ENCODE measurements at regions of chr2 and their contacts with region 1.

Region 1: GRCh38 chr2:38619458-38620164 is 16.9 kb upstream of the HNRNPLL start:
- DNase-seq: no peak
- H3K4me3 Mint-ChIP-seq: no peak overlapping the region
- H3K27ac Mint-ChIP-seq: no peak overlapping the region
- H3K4me1 Mint-ChIP-seq: peaks cover 31% of the 10 kb centered on the region
- H3K27me3 Mint-ChIP-seq: peaks cover 2% of the 10 kb centered on the region

Region 2: DNA sequence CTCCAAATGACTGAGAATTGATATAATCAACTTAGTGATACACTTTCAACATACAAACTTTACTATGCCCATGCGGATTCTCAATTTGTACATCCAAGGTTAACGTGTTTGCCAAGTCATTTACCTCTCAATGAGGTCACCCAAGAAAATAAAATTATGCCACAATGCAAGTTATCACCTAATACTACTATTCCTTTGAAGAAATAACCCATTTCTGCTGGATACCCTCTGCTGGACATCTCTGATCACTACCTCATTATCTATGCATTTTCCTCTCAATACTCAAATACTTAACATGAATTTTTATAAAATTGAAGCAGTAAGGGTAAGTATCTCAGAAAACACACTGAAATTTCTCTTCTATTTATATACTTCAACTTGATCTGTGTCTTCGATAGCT is 29.6 kb before region 1 on chr2:
- intact Hi-C with region 1: no loop called
- DNase-seq: no peak
- H3K4me3 Mint-ChIP-seq: no peak overlapping the region
- H3K27ac Mint-ChIP-seq: no peak overlapping the region
- H3K4me1 Mint-ChIP-seq: peaks cover 64% of the 10 kb centered on the region
- H3K27me3 Mint-ChIP-seq: no peaks in the 10 kb centered on the region

Region 3: DNA sequence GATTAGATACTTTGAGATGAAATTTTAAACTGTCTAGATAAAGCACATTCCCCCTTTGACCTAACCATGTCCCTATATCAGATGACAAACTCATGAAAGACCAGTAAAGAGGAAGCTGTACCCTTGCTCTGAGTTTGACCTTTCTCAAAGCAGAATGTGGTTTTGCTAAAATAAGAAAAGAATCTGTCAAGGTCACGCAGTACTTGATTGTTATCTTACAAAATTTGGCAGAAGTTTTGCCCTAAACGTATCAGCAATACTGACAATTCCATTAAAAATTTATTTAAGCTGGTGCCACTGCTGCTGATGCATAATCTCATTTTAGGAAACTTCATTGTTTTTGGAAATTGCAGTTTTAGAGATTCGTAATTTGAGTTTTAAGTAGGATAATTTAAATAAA is 15.1 kb after region 1 on chr2:
- intact Hi-C with region 1: loop called (anchors 2 kb)
- DNase-seq: no peak
- H3K4me3 Mint-ChIP-seq: no peak overlapping the region
- H3K27ac Mint-ChIP-seq: peak overlapping the region; percentile 29
- H3K4me1 Mint-ChIP-seq: peaks cover 44% of the 10 kb centered on the region
- H3K27me3 Mint-ChIP-seq: no peaks in the 10 kb centered on the region

Measured in activated T-helper 1 cell treated with anti-CD3 and anti-CD28 coated beads, Interleukin-12 subunit alpha, Interleukin-12 subunit beta, Interleukin-2, Interleukin-4 antibody, amounts not matched to agents 30 ng/mL and 10 ng/mL and 1 ng/mL, durations not matched to agents 14 hours and 24 hours and 36 hours (primary cell).